Activated CD4-positive, alpha-beta T cell treated with anti-CD3 and anti-CD28 coated beads for 36 hours (primary cell): ENCODE measurements at regions of chr7 and their contacts with region 1.

Region 1: DNA sequence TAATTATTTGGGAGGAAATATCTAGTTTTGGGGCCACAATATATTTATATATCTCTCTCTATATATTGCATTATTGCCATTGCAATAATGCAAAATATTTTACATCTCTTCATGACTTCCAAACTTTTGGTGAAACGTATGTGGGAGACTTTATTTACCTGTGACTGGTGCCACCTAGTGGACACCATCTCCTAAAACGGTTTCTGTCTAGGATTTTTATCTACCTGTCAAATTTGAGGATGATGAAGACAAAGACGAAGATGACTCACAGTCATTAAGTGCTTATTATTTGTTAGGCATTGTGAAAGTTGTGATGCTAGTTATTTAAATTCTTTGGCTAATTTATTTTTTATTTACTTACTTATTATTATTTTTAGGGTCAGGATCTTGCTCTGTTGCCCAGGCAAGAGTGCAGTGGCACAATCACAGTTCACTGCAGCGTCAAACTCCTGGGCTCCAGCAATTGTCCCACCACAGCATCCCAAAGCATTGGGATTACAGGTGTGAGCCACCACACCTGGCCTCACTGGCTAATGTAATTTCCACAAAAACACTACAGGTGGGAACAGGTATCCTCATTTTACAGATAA is 18.7 kb upstream of the CBLL1 start:
- DNase-seq: peak; percentile 67
- ATAC-seq: peak; percentile 51
- H3K4me3 Mint-ChIP-seq: no peak overlapping the region
- H3K27ac Mint-ChIP-seq: no peak overlapping the region
- H3K4me1 Mint-ChIP-seq: no peaks in the 10 kb centered on the region
- H3K27me3 Mint-ChIP-seq: peaks cover 20% of the 10 kb centered on the region

Region 2: GRCh38 chr7:106793015-106793975 is 932.0 kb before region 1 on chr7:
- CTCF ChIA-PET with region 1: no interaction called
- POLR2A ChIA-PET with region 1: no interaction called
- intact Hi-C with region 1: loop called (anchors 2 to 5 kb)
- DNase-seq: peak; percentile 55
- ATAC-seq: peak; percentile 44
- H3K4me3 Mint-ChIP-seq: no peak overlapping the region
- H3K27ac Mint-ChIP-seq: no peak overlapping the region
- H3K4me1 Mint-ChIP-seq: no peaks in the 10 kb centered on the region
- H3K27me3 Mint-ChIP-seq: no peaks in the 10 kb centered on the region

Region 3: GRCh38 chr7:106947244-106947728 is 778.0 kb before region 1 on chr7:
- CTCF ChIA-PET with region 1: no interaction called
- POLR2A ChIA-PET with region 1: no interaction called
- intact Hi-C with region 1: loop called in 1 of 2 experiments (anchors 10 kb)
- DNase-seq: peak; percentile 49
- ATAC-seq: peak; percentile 51
- H3K4me3 Mint-ChIP-seq: no peak overlapping the region
- H3K27ac Mint-ChIP-seq: no peak overlapping the region
- H3K4me1 Mint-ChIP-seq: no peaks in the 10 kb centered on the region
- H3K27me3 Mint-ChIP-seq: no peaks in the 10 kb centered on the region

Region 4: DNA sequence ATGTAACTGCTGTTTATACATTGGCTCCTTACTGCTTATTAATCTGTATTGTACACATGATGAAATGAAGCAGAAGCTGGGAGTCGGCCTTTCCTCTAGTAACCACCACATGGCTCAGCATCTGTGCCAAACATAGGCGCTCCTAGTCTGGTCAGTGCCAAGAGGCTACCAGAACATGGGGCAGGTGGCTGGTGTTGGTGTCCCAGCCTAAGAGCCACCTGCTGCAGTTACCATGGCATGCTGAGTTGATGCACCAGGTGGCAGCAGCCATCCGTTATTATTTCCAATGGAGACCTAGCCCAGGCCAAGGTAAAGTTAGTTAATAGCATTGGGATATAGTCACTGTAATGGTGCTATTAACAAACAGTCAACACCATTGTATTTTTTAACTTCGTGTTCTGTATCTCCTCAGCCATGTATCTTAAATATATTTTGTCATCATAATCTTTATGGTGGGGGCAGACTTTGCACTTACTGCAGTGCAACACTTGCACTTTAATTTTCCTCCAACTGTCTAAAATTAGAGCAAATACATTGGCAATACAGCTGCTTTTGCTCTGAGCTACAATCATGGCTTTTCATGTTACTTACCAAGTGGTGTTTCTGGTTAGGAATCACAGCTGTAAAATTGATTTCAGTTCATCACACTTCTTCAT is 523.3 kb before region 1 on chr7:
- CTCF ChIA-PET with region 1: interaction called, 9 read pairs
- POLR2A ChIA-PET with region 1: no interaction called
- intact Hi-C with region 1: loop called in 1 of 2 experiments (anchors 1 kb)
- DNase-seq: peak; percentile 61
- ATAC-seq: peak; percentile 78
- H3K4me3 Mint-ChIP-seq: no peak overlapping the region
- H3K27ac Mint-ChIP-seq: no peak overlapping the region
- H3K4me1 Mint-ChIP-seq: no peaks in the 10 kb centered on the region
- H3K27me3 Mint-ChIP-seq: no peaks in the 10 kb centered on the region

Region 5: DNA sequence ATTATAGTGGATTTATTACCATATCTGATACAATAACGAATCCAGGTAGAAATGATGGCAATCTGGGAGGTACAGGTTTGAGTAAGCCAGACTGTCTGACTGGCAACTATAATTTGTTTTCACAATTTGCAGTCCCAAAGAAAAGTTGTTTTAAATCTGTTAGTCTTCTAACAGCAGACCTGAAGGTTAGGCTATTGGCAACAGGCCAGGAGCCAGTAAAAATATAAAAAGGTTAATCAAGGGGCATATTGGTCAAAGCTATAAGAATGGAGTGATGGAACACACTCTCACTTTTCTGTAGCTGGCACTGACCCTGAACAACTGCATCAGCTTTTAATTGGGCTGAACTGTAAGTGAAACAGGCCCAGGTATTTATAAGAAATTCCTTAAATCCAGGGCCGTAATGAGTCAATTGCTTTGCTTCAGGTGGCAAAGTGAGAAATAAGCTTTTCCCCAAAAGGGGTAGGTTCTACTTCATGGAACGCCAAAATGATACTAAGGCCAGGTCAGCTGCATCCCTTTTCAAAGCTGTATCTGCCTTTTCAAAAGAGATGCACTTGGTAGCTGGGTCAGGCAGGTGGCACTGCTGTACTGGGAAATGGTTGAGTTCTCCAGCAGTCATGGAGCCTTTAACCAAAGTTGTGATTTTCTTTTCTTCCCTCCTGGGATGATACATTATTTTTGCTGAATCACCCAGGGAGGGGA is 262.4 kb before region 1 on chr7:
- CTCF ChIA-PET with region 1: interaction called, 26 read pairs
- POLR2A ChIA-PET with region 1: no interaction called
- intact Hi-C with region 1: loop called (anchors 1 kb)
- DNase-seq: peak; percentile 65
- ATAC-seq: peak; percentile 88
- H3K4me3 Mint-ChIP-seq: no peak overlapping the region
- H3K27ac Mint-ChIP-seq: no peak overlapping the region
- H3K4me1 Mint-ChIP-seq: no peaks in the 10 kb centered on the region
- H3K27me3 Mint-ChIP-seq: no peaks in the 10 kb centered on the region

Region 6: GRCh38 chr7:107563775-107564552 is 161.3 kb before region 1 on chr7 and contains the starts of genes COG5 and DUS4L:
- CTCF ChIA-PET with region 1: no interaction called
- POLR2A ChIA-PET with region 1: no interaction called
- intact Hi-C with region 1: loop called in 1 of 2 experiments (anchors 2 kb)
- DNase-seq: peak; percentile 92
- ATAC-seq: peak; percentile 88
- H3K4me3 Mint-ChIP-seq: peak within 1 kb of the TSS; percentile 85
- H3K27ac Mint-ChIP-seq: peak within 1 kb of the TSS; percentile 94
- H3K4me1 Mint-ChIP-seq: peaks cover 62% of the 10 kb centered on the region
- H3K27me3 Mint-ChIP-seq: no peaks in the 10 kb centered on the region
- total RNA-seq, gene COG5: 34.1 to 35.5 TPM
- total RNA-seq, gene DUS4L: 12.8 to 13.3 TPM

Region 7: DNA sequence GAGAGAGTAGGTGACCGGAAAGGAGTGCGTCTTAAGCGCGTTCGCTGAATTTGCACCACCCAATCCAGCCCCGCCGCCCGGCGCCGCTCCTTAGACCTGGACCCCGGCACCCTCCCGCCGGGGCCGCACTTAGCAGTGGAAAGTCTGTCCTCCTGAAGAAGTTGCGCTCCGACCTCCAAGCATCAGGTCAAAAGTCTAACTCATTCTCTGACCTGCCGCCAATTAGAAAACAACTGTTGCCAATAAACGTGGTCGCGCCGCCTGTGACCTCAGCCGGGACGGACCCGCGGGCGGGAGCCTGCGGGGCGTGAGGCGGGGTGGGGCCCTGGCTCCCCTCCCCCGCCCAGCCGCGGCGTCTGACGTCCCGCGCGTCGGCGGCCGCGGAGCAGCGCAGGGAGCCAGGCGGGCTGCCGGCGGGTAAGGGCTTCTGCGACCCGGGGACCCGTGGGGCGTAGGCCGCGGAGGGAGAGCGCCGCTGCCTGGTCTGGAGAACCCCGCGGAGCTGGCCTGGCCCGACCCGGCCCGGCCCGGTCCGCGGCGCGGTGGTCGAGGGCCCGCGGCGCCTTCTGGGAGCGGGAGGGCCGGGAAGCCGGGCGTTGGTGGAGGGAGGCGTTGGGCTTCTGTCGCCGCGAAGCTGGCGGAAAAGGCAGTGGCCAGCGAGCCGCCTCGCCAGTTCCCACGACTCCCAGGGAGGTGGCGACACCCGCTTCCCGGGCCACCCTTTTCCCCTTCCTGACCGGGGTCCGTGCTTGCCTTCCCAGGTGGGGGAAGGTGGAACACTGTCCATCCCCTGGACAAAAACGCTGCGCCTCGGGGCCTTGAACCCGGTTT is 145.1 kb before region 1 on chr7 and contains the start of gene BCAP29:
- CTCF ChIA-PET with region 1: no interaction called
- POLR2A ChIA-PET with region 1: no interaction called
- intact Hi-C with region 1: loop called (anchors 1 to 2 kb)
- DNase-seq: peak; percentile 83
- ATAC-seq: peak; percentile 96
- H3K4me3 Mint-ChIP-seq: peak within 1 kb of the TSS; percentile 84
- H3K27ac Mint-ChIP-seq: peak within 1 kb of the TSS; percentile 88
- H3K4me1 Mint-ChIP-seq: peaks cover 18% of the 10 kb centered on the region
- H3K27me3 Mint-ChIP-seq: no peaks in the 10 kb centered on the region
- total RNA-seq, gene BCAP29: 31.4 to 38.8 TPM

Region 8: DNA sequence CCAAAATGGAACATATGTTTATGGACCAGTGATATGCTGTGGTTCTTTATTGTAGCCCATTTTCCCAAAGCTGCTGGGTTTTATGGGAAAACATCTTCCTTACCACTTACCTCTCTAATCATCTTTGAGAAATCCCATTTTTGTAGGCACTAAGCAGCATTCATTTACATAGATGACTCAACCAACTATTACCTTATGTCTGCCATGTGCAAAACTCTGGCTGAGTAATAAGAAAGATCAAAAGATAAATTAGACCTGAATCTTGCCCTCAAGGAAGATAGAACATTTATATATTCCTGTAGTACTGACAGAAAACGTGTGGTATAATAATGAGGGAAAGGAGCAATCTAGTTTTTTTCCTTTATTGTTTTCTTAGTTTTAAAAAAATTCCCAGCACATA is 43.0 kb after region 1 on chr7:
- CTCF ChIA-PET with region 1: no interaction called
- POLR2A ChIA-PET with region 1: no interaction called
- intact Hi-C with region 1: no loop called
- DNase-seq: no peak
- ATAC-seq: peak; percentile 47
- H3K4me3 Mint-ChIP-seq: no peak overlapping the region
- H3K27ac Mint-ChIP-seq: no peak overlapping the region
- H3K4me1 Mint-ChIP-seq: peaks cover 29% of the 10 kb centered on the region
- H3K27me3 Mint-ChIP-seq: no peaks in the 10 kb centered on the region